ENCODE measurements at regions of chr2 and their contacts with region 1.

Region 1: DNA sequence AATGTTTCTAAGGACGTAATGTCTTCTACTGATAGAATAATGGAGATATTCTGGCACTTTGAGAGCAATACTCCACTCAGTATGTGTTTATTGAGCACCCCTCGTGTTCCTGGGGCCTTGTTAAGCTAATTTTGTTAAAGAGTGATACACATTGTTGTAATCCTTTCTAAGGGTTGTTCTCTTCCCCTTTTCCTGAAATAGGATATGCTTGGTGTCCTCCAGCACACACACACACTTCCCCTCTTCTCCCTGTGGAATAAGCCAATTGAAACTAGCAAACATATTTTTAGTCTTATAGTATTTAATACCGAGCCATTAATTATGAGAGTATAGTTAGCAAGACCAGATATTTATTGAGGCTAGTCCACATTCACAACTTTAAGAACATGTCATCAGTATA is 114.1 kb downstream of the CRIM1 start:
- DNase-seq: no peak
- H3K4me3 Mint-ChIP-seq: no peak overlapping the region
- H3K27ac Mint-ChIP-seq: no peak overlapping the region
- H3K4me1 Mint-ChIP-seq: no peaks in the 10 kb centered on the region
- H3K27me3 Mint-ChIP-seq: no peaks in the 10 kb centered on the region

Region 2: GRCh38 chr2:36456227-36457175 is 13.2 kb before region 1 on chr2:
- CTCF ChIA-PET with region 1: no interaction called
- intact Hi-C with region 1: no loop called
- DNase-seq: no peak
- H3K4me3 Mint-ChIP-seq: no peak overlapping the region
- H3K27ac Mint-ChIP-seq: no peak overlapping the region
- H3K4me1 Mint-ChIP-seq: no peaks in the 10 kb centered on the region
- H3K27me3 Mint-ChIP-seq: no peaks in the 10 kb centered on the region

Region 3: GRCh38 chr2:36578343-36579280 is 108.9 kb after region 1 on chr2:
- CTCF ChIA-PET with region 1: no interaction called
- intact Hi-C with region 1: no loop called
- DNase-seq: no peak
- H3K4me3 Mint-ChIP-seq: no peak overlapping the region
- H3K27ac Mint-ChIP-seq: peak overlapping the region; percentile 38
- H3K4me1 Mint-ChIP-seq: peaks cover 8% of the 10 kb centered on the region
- H3K27me3 Mint-ChIP-seq: no peaks in the 10 kb centered on the region

Region 4: GRCh38 chr2:36770542-36771287 is 301.0 kb after region 1 on chr2:
- CTCF ChIA-PET with region 1: no interaction called
- intact Hi-C with region 1: no loop called
- DNase-seq: peak; percentile 67
- H3K4me3 Mint-ChIP-seq: no peak overlapping the region
- H3K27ac Mint-ChIP-seq: no peak overlapping the region
- H3K4me1 Mint-ChIP-seq: no peaks in the 10 kb centered on the region
- H3K27me3 Mint-ChIP-seq: peaks cover 3% of the 10 kb centered on the region

Region 5: DNA sequence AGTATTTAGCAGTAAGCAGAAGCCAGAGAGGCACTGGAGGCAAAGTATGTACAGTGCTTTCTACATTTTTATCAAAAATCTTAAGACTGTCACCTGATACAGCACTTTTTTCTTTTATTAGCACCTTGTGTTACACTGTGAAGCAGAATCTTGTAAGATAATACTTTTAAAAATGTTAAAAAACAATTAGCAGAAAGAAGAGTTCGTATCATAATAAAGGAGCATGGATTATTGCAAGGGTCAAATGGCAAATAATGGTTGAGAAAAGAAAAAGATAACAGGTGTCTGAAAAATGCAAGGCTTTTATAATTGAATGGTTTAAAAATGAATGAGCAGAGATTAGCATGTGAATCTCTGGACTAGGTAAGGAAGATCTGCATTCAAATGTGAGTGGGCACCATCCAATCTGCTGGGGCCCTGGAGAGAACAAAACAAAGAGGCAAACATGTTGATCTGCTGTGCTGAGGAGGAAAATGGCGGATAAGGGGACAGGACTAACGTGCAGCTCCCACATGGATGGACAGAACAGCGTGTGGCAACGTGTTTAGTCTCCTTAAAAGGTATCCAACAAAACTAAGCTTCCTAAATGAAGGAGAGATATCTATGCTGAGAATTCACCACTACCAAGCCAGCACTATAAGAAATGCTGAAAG is 736.1 kb after region 1 on chr2:
- CTCF ChIA-PET with region 1: interaction called, 10 read pairs
- intact Hi-C with region 1: no loop called
- DNase-seq: no peak
- H3K4me3 Mint-ChIP-seq: no peak overlapping the region
- H3K27ac Mint-ChIP-seq: no peak overlapping the region
- H3K4me1 Mint-ChIP-seq: peaks cover 34% of the 10 kb centered on the region
- H3K27me3 Mint-ChIP-seq: no peaks in the 10 kb centered on the region

Measured in activated naive CD4-positive, alpha-beta T cell treated with anti-CD3 and anti-CD28 coated beads for 36 hours (primary cell).